Naive thymus-derived CD4-positive, alpha-beta T cell (primary cell): ENCODE measurements at regions of chr12 and their contacts with region 1.

Region 1: GRCh38 chr12:68223083-68223747 is 2.4 kb downstream of the IL26 start:
- DNase-seq: peak; percentile 39 to 74 (median 64)
- ATAC-seq: peak; percentile 99
- H3K4me3 ChIP-seq: no peak overlapping the region
- H3K4me3 Mint-ChIP-seq: peak overlapping the region in 9 of 10 donors; percentile 30 to 86 (median 65)
- H3K27ac ChIP-seq: no peak overlapping the region
- H3K27ac Mint-ChIP-seq: peak overlapping the region in 6 of 9 donors; percentile 8 to 77 (median 44)
- H3K4me1 ChIP-seq: no peaks in the 10 kb centered on the region
- H3K4me1 Mint-ChIP-seq: peaks cover 6 to 35% (median 6%) of the 10 kb centered on the region in 7 donors
- H3K27me3 ChIP-seq: no peaks in the 10 kb centered on the region
- H3K27me3 Mint-ChIP-seq: peaks cover 0 to 11% (median 0%) of the 10 kb centered on the region in 5 donors

Region 2: DNA sequence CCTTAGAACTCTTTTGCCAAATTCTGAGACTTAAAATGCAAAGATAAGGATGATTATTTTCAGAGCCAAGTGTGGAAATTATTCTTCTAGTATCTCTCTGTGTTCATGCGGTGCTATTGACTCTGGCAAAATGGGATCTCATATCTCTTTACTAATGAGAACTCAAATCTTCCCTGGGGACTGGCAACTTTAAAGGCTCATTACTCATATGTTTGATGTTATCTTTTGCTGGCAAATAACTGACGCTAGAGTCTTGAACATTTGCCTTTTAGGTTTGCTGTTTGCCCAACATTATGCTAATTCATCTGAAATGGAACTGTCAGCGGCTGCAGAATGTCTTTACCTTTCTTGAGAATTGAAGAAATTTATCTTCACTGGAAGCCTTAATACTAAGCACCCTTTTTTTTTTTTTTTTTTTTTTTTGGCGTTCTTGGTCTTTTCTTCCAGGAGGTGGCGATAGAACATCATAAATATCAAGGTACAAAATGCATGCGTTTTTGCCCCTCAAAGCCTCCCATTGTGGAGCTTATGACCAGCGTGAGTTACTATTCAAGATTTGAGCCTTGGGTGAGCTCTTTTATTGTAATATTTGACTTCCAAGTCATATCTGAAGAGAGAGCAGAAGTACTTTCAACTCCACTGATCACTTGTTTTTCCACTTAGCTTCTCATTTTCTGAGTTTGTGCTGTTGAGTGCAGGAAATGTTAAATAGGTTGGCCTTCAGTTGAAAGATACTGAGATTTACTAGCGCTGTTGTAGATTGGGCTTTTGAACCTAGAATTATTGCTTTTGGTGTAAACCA is 867.4 kb before region 1 on chr12:
- CTCF ChIA-PET with region 1: interaction called, 5 read pairs
- POLR2A ChIA-PET with region 1: no interaction called
- intact Hi-C with region 1: loop called in 1 of 2 experiments (anchors 1 kb)
- DNase-seq: peak in 7 of 9 donors; percentile 27 to 68 (median 61)
- ATAC-seq: peak; percentile 70
- H3K4me3 ChIP-seq: no peak overlapping the region
- H3K4me3 Mint-ChIP-seq: peak overlapping the region in 7 of 10 donors; percentile 23 to 65 (median 51)
- H3K27ac ChIP-seq: no peak overlapping the region
- H3K27ac Mint-ChIP-seq: peak overlapping the region in 3 of 9 donors; percentile 42 to 63 (median 54)
- H3K4me1 ChIP-seq: peaks cover 0 to 5% of the 10 kb centered on the region in 2 donors
- H3K4me1 Mint-ChIP-seq: peaks cover 2 to 21% (median 16%) of the 10 kb centered on the region in 7 donors
- H3K27me3 ChIP-seq: no peaks in the 10 kb centered on the region
- H3K27me3 Mint-ChIP-seq: no peaks in the 10 kb centered on the region

Region 3: DNA sequence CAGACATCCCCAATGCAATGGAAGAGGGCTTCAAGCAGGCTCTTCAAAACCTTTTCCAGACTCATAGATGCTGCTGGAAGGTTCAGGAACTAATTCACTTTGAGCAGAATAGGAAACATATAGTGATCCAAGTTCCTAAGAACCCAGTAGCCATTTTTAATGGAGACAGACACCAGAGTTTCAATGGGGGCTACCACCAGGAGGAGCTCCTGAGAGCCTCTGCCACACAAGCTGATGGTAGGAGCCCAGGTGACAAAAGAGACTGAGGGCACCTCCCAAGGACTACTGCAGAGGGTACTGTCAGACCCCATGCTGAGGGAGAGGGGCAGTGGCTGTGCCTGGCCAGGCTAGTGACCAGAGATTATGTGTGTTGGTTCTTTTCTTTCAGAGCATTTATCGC is 109.6 kb before region 1 on chr12:
- CTCF ChIA-PET with region 1: no interaction called
- POLR2A ChIA-PET with region 1: no interaction called
- intact Hi-C with region 1: loop called in 1 of 2 experiments (anchors 1 kb)
- DNase-seq: peak in 6 of 9 donors; percentile 5 to 28 (median 21)
- ATAC-seq: peak; percentile 55
- H3K4me3 ChIP-seq: no peak overlapping the region
- H3K4me3 Mint-ChIP-seq: no peak overlapping the region
- H3K27ac ChIP-seq: no peak overlapping the region
- H3K27ac Mint-ChIP-seq: peak overlapping the region in 1 of 9 donors; percentile 28
- H3K4me1 ChIP-seq: peaks cover 0 to 27% of the 10 kb centered on the region in 2 donors
- H3K4me1 Mint-ChIP-seq: peaks cover 8 to 41% (median 14%) of the 10 kb centered on the region in 7 donors
- H3K27me3 ChIP-seq: no peaks in the 10 kb centered on the region
- H3K27me3 Mint-ChIP-seq: no peaks in the 10 kb centered on the region

Region 4: DNA sequence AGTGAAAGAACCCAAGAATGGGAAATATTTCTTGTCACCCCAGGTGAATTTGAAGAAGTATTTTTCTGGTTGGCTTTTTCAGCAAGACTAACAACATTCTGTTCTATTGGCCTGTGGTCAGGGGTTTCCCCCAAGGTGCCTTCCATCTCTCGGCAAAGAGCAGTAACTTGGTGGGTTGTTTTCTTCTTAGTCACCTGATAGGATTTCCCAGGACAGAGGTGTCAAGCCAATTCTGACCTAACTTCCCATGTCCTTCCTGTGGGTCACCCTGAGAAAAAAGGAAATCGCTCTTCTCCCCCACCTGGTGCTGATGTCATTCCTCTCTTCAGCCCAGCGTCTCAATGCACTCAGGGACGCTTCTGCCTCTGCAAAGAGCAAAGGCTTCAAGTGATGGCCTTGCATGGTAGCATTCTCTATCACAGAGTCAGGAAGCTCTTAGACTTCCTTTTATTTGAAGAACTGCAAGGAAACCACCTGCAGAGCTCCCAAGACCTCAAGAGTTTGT is 47.6 kb before region 1 on chr12:
- CTCF ChIA-PET with region 1: interaction called, 4 read pairs
- POLR2A ChIA-PET with region 1: interaction called, 4 read pairs
- intact Hi-C with region 1: loop called in 1 of 2 experiments (anchors 2 kb)
- DNase-seq: peak; percentile 35 to 90 (median 86)
- ATAC-seq: peak; percentile 93
- H3K4me3 ChIP-seq: peak overlapping the region; percentile 40
- H3K4me3 Mint-ChIP-seq: peak overlapping the region; percentile 69 to 86 (median 84)
- H3K27ac ChIP-seq: peak overlapping the region; percentile 78
- H3K27ac Mint-ChIP-seq: peak overlapping the region; percentile 87 to 97 (median 93)
- H3K4me1 ChIP-seq: peaks cover 20 to 65% of the 10 kb centered on the region in 2 donors
- H3K4me1 Mint-ChIP-seq: peaks cover 30 to 82% (median 67%) of the 10 kb centered on the region in 7 donors
- H3K27me3 ChIP-seq: no peaks in the 10 kb centered on the region
- H3K27me3 Mint-ChIP-seq: no peaks in the 10 kb centered on the region

Region 5: DNA sequence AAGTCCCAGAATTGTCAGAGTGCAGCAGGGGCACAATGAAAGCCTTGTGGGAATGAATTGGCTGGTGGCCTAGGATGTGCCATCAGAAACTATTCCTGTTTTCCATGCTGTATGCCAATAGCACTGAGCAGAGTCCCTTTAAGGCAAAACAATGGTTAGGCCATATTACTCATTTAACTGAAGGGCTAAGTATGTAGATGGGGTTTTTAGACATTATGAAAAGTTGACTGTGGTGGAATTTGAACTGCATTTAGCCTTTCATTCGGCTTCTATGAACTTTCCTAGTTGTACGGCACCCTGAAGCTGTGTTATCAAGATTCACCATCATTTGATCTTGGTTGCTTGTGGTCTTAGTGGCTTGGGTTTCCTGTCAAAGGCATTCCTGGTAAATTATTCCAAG is 22.4 kb before region 1 on chr12:
- CTCF ChIA-PET with region 1: interaction called, 10 read pairs
- POLR2A ChIA-PET with region 1: interaction called, 4 read pairs
- intact Hi-C with region 1: no loop called
- DNase-seq: no peak
- ATAC-seq: no peak
- H3K4me3 ChIP-seq: no peak overlapping the region
- H3K4me3 Mint-ChIP-seq: peak overlapping the region in 4 of 10 donors; percentile 14 to 65 (median 32)
- H3K27ac ChIP-seq: no peak overlapping the region
- H3K27ac Mint-ChIP-seq: peak overlapping the region in 1 of 9 donors; percentile 28
- H3K4me1 ChIP-seq: peaks cover 14 to 21% of the 10 kb centered on the region in 2 donors
- H3K4me1 Mint-ChIP-seq: peaks cover 5 to 42% (median 28%) of the 10 kb centered on the region in 7 donors
- H3K27me3 ChIP-seq: no peaks in the 10 kb centered on the region
- H3K27me3 Mint-ChIP-seq: peaks cover 0 to 9% (median 0%) of the 10 kb centered on the region in 5 donors

Region 6: GRCh38 chr12:68317047-68317667 is 93.9 kb after region 1 on chr12:
- CTCF ChIA-PET with region 1: interaction called, 67 read pairs
- POLR2A ChIA-PET with region 1: interaction called, 5 read pairs
- intact Hi-C with region 1: loop called (anchors 1 kb)
- DNase-seq: peak in 7 of 9 donors; percentile 13 to 63 (median 50)
- ATAC-seq: no peak
- H3K4me3 ChIP-seq: no peak overlapping the region
- H3K4me3 Mint-ChIP-seq: no peak overlapping the region
- H3K27ac ChIP-seq: no peak overlapping the region
- H3K27ac Mint-ChIP-seq: no peak overlapping the region
- H3K4me1 ChIP-seq: no peaks in the 10 kb centered on the region
- H3K4me1 Mint-ChIP-seq: peaks cover 0 to 5% (median 0%) of the 10 kb centered on the region in 7 donors
- H3K27me3 ChIP-seq: no peaks in the 10 kb centered on the region
- H3K27me3 Mint-ChIP-seq: no peaks in the 10 kb centered on the region

Region 7: DNA sequence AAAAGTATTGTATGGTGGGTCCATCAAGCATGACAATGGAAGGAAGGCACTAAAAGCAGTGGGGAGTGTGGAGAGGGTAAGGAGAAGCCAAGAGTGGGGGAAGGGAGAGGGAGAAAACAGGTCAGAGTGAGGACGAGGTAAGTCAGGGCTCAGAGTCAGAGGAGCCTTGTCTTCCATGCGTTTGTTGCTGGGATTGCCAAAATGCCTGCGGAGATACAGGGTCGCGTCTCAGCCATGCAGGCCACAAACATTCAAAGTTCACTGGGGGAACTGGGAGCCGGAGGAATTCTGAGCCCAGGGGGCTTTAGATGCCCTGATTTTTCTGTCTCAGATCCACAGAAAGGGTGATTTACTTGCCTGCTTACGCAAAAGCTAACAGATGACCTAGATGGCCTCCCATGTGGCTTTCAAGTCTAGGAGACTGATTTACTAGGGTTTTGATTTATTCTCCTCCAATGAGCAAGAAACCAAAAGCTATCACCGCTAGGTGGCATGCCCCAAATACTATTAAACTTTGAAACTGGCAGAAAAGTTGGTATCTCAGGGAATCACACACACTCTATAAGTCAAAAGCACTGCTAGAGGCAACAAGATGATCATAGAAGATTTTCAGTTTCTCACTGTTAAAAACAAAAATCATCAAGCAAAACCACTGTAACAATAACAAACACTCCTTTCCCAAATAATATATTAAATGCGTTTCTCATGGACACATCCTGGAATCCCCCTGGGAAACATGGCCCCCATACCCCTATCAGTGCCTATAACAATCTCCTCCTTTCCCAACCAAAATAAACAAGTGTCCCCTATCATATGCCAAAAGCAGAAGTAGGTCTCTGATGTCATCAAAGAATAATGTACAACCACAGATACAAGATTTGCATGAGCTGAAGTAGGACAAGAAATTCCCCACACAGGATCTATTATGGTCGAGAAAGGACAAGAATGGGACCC is 135.6 kb after region 1 on chr12:
- CTCF ChIA-PET with region 1: no interaction called
- POLR2A ChIA-PET with region 1: no interaction called
- intact Hi-C with region 1: loop called in 1 of 2 experiments (anchors 1 kb)
- DNase-seq: peak in 7 of 9 donors; percentile 56 to 80 (median 76)
- ATAC-seq: peak; percentile 84
- H3K4me3 ChIP-seq: no peak overlapping the region
- H3K4me3 Mint-ChIP-seq: peak overlapping the region in 1 of 10 donors; percentile 38
- H3K27ac ChIP-seq: no peak overlapping the region
- H3K27ac Mint-ChIP-seq: peak overlapping the region in 2 of 9 donors; percentile 56 to 72
- H3K4me1 ChIP-seq: peaks cover 13 to 17% of the 10 kb centered on the region in 2 donors
- H3K4me1 Mint-ChIP-seq: peaks cover 25 to 36% (median 30%) of the 10 kb centered on the region in 7 donors
- H3K27me3 ChIP-seq: no peaks in the 10 kb centered on the region
- H3K27me3 Mint-ChIP-seq: no peaks in the 10 kb centered on the region